HepG2 (cell line): ENCODE measurements at regions of chr20 and their contacts with region 1.

Region 1: GRCh38 chr20:5156675-5157448 is 30.1 kb downstream of the CDS2 start:
- DNase-seq: peak; percentile 70
- ATAC-seq: peak; percentile 33; the same call in 2 of the 3 replicates
- H3K4me3 ChIP-seq: no peak overlapping the region
- H3K27ac ChIP-seq: peak overlapping the region; percentile 19
- H3K4me1 ChIP-seq: peaks cover 84% of the 10 kb centered on the region
- H3K27me3 ChIP-seq: no peaks in the 10 kb centered on the region
- CTCF ChIP-seq: peak; percentile 46
- EP300 ChIP-seq: peak in 1 of 2 experiments; percentile 72; a peak in 2 of 4 replicates
- POLR2A ChIP-seq: no peak
- RAD21 ChIP-seq: no peak

Region 2: DNA sequence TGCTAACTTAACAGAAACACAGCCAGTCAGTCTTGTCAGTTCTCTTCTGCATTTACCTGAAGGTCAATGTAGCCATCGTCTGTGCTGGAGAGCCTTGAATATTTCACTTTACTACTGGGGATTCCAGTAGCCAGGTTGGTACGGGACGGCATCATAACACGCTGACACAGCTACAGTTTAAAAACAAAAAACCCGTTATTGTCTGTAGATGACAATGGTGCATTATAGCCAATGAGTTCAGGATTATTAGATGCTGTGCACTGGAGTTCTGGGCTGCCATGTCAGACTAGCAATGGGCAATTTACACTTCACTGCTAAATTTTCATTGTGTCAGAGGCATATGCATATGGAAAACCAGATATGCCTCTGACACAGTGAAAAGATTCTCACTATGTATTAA is 47.6 kb before region 1 on chr20:
- CTCF ChIA-PET with region 1: no interaction called
- POLR2A ChIA-PET with region 1: no interaction called
- in situ Hi-C with region 1: no loop called
- intact Hi-C with region 1: no loop called
- DNase-seq: no peak
- ATAC-seq: no peak
- H3K4me3 ChIP-seq: no peak overlapping the region
- H3K27ac ChIP-seq: no peak overlapping the region
- H3K4me1 ChIP-seq: peaks cover 19% of the 10 kb centered on the region
- H3K27me3 ChIP-seq: peaks cover 0 to 4% of the 10 kb centered on the region in 2 experiments; a peak in 1 of 5 replicates
- CTCF ChIP-seq: no peak
- EP300 ChIP-seq: no peak
- POLR2A ChIP-seq: no peak
- RAD21 ChIP-seq: no peak

Region 3: DNA sequence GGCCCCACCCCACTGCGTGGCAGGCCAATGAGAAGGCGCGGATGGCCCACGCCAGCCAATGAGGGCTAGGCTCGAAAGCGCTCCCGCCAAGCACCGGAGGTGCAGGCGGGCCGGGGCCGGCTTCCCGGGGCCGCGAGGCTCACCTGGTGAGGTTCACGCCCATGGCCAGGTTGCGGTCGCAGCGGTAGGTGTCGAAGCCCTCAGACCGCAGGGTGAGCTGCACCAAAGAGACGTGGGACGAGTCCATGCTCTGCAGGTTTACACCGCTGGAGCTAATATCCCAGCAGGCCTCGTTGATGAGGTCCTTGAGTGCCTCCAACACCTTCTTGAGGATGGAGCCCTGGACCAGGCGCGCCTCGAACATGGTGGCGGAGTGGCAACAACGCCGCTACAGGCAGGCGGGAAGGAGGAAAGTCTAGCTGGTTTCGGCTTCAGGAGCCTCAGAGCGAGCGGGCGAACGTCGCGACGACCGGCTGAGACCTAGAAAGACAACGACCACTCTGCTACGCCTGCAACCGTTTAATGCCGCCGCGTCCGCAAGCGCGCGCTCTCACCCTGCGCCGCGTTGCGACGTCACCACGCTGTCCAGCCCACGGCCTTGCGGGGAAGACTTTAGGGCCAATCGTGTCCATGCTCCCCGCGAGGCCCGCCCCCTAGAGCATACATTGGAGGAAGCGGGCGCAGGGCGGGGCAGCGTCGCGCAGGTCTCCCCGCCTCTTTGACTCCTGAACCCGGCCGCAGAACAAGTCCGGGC is 37.2 kb before region 1 on chr20 and contains the start of gene PCNA:
- CTCF ChIA-PET with region 1: no interaction called
- POLR2A ChIA-PET with region 1: interaction called, 176 read pairs
- in situ Hi-C with region 1: no loop called
- intact Hi-C with region 1: no loop called
- DNase-seq: peak; percentile 100
- ATAC-seq: peak; percentile 96
- H3K4me3 ChIP-seq: peak within 1 kb of the TSS; percentile 82 to 92 (median 83)
- H3K27ac ChIP-seq: peak within 1 kb of the TSS; percentile 86
- H3K4me1 ChIP-seq: peaks cover 50% of the 10 kb centered on the region
- H3K27me3 ChIP-seq: no peaks in the 10 kb centered on the region; a peak in 1 of 5 replicates
- CTCF ChIP-seq: peak; percentile 49
- EP300 ChIP-seq: peak; percentile 14 to 16; a peak in 2 of 4 replicates
- POLR2A ChIP-seq: peak; percentile 100
- RAD21 ChIP-seq: peak; percentile 52
- total RNA-seq, gene PCNA: 655 and 1,008 TPM in 2 replicates

Region 4: DNA sequence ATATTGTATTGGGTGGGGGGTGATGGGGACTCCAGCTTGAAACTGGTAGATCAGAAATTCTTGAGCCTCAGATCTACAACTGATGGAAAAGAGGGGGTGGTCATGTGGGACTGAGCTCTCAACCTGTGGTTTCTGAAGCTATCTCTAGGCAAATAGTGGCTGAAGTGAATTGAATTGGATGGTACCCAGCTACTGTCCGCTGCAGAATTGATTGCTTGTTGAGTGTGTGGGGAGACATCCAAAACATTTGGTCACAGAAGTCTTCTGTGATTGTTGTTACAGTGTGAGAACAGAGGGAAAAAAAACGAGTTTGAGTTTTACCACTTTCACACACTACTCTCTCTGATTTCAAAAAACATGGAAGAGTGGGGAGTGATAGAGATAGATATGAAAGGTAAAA is 15.2 kb before region 1 on chr20:
- CTCF ChIA-PET with region 1: no interaction called
- POLR2A ChIA-PET with region 1: interaction called, 6 read pairs
- in situ Hi-C with region 1: no loop called
- intact Hi-C with region 1: loop called (anchors 1 kb)
- DNase-seq: no peak
- ATAC-seq: no peak
- H3K4me3 ChIP-seq: no peak overlapping the region
- H3K27ac ChIP-seq: no peak overlapping the region
- H3K4me1 ChIP-seq: peaks cover 67% of the 10 kb centered on the region
- H3K27me3 ChIP-seq: no peaks in the 10 kb centered on the region
- CTCF ChIP-seq: no peak
- EP300 ChIP-seq: no peak
- POLR2A ChIP-seq: no peak
- RAD21 ChIP-seq: no peak

Region 5: DNA sequence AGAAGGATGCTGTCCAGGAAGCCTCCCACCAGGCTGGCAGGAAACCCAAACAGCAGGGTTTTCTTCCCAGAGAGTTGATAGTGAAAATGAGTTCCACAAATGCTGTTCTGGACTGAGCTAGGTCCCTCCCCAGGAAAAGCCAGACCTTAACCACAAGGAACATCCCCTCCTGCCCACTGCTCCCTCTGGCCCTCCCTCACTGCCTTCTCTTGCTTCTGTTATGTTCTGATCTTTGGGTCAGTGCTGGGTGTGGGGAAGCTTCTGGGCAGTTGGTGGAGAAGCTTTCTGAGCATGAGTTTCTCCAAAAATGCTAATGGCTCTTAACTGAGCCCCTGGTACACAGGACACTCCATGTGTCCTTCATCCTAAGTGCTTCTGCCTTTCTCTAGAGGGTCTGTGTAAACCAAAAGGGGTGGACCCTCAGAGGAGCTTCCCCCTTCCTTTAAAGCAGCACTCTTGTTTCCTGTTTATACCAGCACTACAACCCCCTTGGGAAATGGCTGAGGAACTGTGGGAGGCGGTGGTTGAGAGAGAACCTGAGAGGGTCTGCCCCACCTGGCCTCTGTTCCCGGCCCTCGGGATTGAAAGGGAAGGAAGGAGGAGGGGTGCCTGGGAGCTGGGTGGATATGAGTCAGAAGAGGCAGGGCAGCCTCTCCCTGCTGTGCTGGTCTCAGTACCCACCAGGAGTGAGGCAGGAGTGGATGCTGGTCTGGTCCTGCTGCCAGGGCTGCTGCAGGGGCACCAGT is 12.0 kb after region 1 on chr20:
- CTCF ChIA-PET with region 1: no interaction called
- POLR2A ChIA-PET with region 1: interaction called, 16 read pairs
- in situ Hi-C with region 1: no loop called
- intact Hi-C with region 1: no loop called
- DNase-seq: no peak
- ATAC-seq: no peak
- H3K4me3 ChIP-seq: no peak overlapping the region
- H3K27ac ChIP-seq: no peak overlapping the region
- H3K4me1 ChIP-seq: peaks cover 55% of the 10 kb centered on the region
- H3K27me3 ChIP-seq: no peaks in the 10 kb centered on the region
- CTCF ChIP-seq: no peak
- EP300 ChIP-seq: no peak
- POLR2A ChIP-seq: no peak
- RAD21 ChIP-seq: no peak